Psoas muscle (tissue), 8 donors: ENCODE measurements at regions of chr2 and their contacts with region 1.

Region 1: GRCh38 chr2:189698020-189698887 is 23.8 kb downstream of the ANKAR start:
- DNase-seq: no peak
- ATAC-seq: peak; percentile 63 to 89 (median 68)
- H3K4me3 ChIP-seq: peak overlapping the region; percentile 39
- H3K27ac ChIP-seq: peak overlapping the region; percentile 48
- H3K4me1 ChIP-seq: no peaks in the 10 kb centered on the region
- H3K27me3 ChIP-seq: no peaks in the 10 kb centered on the region
- CTCF ChIP-seq: peak; percentile 76

Region 2: GRCh38 chr2:189129971-189130370 is 568.3 kb before region 1 on chr2:
- intact Hi-C with region 1: no loop called
- DNase-seq: no peak
- ATAC-seq: no peak
- H3K4me3 ChIP-seq: no peak overlapping the region
- H3K27ac ChIP-seq: no peak overlapping the region
- H3K4me1 ChIP-seq: no peaks in the 10 kb centered on the region
- H3K27me3 ChIP-seq: no peaks in the 10 kb centered on the region
- CTCF ChIP-seq: no peak

Region 3: GRCh38 chr2:189549449-189549832 is 148.8 kb before region 1 on chr2:
- intact Hi-C with region 1: no loop called
- DNase-seq: no peak
- ATAC-seq: no peak
- H3K4me3 ChIP-seq: no peak overlapping the region
- H3K27ac ChIP-seq: peak overlapping the region; percentile 59
- H3K4me1 ChIP-seq: peaks cover 18% of the 10 kb centered on the region
- H3K27me3 ChIP-seq: no peaks in the 10 kb centered on the region
- CTCF ChIP-seq: no peak

Region 4: DNA sequence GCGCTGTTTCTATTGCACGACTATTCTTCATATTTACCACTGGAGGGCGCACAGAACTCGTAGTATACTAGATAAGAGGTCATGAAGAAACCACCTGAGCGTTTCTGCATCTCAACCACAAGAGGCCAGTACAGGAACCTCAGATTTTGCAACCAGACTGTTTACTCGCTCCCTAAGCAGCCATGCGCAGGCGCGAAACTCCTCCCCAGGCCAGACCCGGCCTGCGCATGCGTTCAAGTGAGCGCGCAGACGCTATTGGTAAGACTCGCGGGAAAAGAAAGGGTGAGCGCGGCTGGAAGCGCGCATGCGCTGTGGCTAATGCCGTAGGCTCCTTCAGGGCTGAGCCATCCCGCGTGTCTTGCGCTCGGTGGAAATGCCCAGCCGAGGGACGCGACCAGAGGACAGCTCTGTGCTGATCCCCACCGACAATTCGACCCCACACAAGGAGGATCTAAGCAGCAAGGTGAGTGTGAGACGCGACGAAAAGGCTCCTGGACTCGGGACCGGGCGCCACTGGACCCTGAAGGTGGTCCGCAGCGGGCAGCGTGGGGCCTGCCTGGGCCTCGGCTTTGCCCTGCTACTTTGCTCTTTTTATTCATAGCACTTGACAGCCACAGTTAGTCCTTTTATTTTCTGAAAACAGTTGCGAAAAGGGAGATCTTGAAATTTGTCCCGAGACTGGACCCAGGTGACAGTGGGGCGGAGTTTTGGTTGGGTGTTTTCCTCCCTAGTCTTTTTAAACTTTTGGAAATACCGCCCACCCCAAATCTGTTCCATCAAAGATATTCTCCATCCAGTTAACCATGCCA is 36.9 kb before region 1 on chr2 and contains the start of gene ASNSD1:
- intact Hi-C with region 1: loop called (anchors 1 to 5 kb)
- DNase-seq: peak; percentile 99 to 100
- ATAC-seq: peak; percentile 98 to 99 (median 99)
- H3K4me3 ChIP-seq: peak within 1 kb of the TSS; percentile 88
- H3K27ac ChIP-seq: peak within 1 kb of the TSS; percentile 93
- H3K4me1 ChIP-seq: peaks cover 20% of the 10 kb centered on the region
- H3K27me3 ChIP-seq: no peaks in the 10 kb centered on the region
- CTCF ChIP-seq: peak; percentile 97
- total RNA-seq, gene ASNSD1: 50.8 to 67.0 (median 62.0) TPM

Region 5: DNA sequence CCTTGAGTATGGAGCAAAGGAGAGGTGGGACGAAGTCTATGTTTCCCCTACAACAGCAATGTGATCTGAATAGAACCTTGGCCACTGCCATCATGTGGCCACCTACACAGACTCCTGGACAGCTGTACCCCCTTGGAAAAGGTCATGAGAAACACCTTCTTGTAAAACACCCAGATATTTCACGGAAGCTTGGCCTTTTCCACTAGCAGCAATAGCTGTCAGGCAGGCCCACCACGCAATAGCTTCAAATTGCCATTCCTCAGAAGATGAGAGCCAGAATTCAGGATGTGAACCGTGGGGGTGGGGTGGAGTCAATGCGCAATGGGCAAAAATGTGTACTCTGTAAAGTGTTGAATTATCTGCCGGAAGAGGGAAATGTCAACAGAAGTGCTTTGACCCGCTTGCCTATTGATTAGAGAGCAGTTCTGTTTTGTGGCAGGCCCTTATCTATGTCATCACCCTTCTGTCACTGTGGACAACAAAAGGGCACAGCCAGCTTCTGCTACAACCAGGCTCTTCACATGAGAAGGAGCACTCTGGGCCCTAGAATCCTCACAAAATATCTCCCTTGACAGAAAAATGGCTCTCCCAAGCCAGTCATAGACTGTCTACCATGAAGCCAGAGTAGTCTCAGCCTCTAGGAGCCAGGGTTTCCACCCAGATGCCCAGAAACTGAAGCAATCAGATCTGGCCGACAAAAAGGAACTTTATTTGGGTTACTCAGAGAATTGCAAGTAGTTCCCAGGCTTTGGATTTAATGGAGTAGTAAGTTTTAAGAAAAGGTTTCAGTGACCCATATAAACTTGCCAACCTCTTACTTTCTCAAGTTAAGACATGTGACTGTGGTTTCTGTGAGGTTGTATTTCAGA is 654.6 kb after region 1 on chr2:
- intact Hi-C with region 1: no loop called
- DNase-seq: no peak
- ATAC-seq: peak; percentile 34 to 62 (median 45)
- H3K4me3 ChIP-seq: no peak overlapping the region
- H3K27ac ChIP-seq: peak overlapping the region; percentile 66
- H3K4me1 ChIP-seq: peaks cover 27% of the 10 kb centered on the region
- H3K27me3 ChIP-seq: no peaks in the 10 kb centered on the region
- CTCF ChIP-seq: no peak